AG04450 (cell line): ENCODE measurements at regions of chr12 and their contacts with region 1.

Region 1: DNA sequence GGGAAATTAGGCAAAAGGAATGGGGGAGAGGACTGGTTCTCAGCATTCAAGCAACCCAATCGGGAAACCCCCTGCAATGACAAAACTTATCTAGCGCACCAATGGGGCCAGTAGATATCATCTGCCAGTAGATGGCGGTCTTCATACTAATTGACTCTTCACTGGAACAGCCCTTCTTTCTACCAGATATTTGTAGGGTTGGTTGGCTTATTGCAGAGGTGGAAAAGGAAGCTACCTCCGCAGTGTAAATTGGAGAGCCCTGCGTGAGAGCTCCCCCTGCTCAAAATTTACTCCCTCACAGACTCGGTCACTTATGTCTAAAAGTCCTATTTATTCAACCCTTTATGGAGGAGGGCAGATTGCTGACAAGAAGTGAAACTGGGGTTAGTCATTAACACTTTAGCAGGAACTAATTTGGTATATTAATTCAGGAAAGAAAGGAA is 166.1 kb upstream of the CCND2 start:
- DNase-seq: peak; percentile 8
- H3K4me3 ChIP-seq: no peak overlapping the region
- H3K27ac ChIP-seq: no peak overlapping the region
- H3K27me3 ChIP-seq: peaks cover 3% of the 10 kb centered on the region
- CTCF ChIP-seq: peak; percentile 75

Region 2: GRCh38 chr12:3421191-3421978 is 686.1 kb before region 1 on chr12:
- CTCF ChIA-PET with region 1: no interaction called
- POLR2A ChIA-PET with region 1: no interaction called
- DNase-seq: no peak
- H3K4me3 ChIP-seq: no peak overlapping the region
- H3K27ac ChIP-seq: no peak overlapping the region
- H3K27me3 ChIP-seq: peaks cover 10% of the 10 kb centered on the region
- CTCF ChIP-seq: no peak

Region 3: DNA sequence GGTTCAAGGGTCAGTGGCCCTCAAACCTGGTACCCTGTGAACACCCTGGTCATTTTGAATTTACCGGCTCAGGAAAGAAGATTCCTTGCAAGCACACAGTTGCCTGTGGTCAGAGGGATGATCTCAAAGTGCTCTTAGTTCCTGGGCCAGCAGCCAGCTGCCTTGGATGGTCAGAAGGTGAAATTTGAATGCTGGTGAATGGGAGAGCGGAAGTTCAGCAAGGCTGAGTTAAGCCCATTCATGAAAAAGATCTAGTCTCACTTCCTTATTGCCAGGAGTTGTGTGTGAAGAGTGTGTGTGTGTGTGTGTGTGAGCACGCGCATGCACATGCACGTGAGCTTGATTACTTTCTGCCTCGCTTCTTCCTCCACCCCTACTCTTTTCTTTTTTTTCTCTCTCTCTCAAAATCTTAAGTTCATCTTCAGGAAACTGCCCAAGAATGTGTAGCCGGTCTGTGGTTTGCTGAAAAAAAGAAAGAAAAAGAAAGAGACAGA is 10.6 kb after region 1 on chr12:
- CTCF ChIA-PET with region 1: interaction called, 25 read pairs
- POLR2A ChIA-PET with region 1: no interaction called
- DNase-seq: peak; percentile 27
- H3K4me3 ChIP-seq: no peak overlapping the region
- H3K27ac ChIP-seq: no peak overlapping the region
- H3K27me3 ChIP-seq: peaks cover 4% of the 10 kb centered on the region
- CTCF ChIP-seq: no peak

Region 4: GRCh38 chr12:4156317-4156716 is 48.9 kb after region 1 on chr12:
- CTCF ChIA-PET with region 1: interaction called, 12 read pairs
- POLR2A ChIA-PET with region 1: no interaction called
- DNase-seq: no peak
- H3K4me3 ChIP-seq: no peak overlapping the region
- H3K27ac ChIP-seq: no peak overlapping the region
- H3K27me3 ChIP-seq: peaks cover 2% of the 10 kb centered on the region
- CTCF ChIP-seq: no peak

Region 5: DNA sequence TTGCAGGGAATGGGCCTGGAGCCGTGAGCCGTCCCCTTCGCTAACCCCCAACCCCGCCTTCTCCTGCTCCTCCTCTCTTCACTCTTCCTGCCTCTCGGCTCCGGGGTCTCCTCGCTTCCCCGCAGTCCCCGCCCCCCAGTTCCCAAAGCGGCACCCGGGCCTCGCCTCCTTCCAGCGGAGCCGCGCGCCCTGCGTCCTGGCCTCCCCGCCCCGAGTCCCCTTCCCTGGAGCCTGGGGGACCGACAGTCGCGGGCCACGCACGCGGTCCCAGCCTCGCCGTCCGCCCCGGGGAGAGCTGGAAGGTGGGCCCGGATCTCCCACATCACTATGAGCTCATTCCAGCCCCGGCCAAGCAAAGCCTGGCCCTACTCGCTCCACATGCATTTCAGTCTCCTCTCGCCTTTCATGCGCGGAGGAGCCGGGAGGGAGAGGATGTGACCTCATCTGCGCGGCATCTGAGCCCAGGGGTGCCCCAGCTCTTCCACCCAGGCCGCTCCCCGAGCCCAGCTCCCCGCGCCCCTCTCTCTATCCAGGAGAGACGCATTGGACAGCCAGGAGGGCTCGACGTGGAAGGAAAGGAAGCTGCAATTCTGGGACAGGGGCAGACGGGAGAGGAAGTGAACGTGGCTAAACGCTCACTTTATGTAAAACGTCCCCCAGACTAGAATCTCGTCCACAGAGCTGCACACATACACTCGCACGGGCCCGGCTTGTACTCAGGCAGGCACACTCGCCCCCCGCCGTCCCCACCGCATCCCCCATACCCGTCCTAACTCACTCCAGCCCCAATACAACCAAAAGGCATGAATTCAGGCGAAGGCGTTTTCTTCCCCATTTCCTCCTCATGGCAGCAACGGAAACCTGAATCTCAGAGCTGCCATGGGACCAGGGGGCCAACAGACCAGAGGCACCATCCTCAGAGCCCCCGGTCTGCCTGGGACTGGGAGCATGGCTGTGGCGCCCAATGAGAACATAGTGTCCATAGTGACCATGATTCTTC is 57.4 kb after region 1 on chr12:
- CTCF ChIA-PET with region 1: interaction called, 14 read pairs
- POLR2A ChIA-PET with region 1: no interaction called
- DNase-seq: peak; percentile 44
- H3K4me3 ChIP-seq: peak overlapping the region; percentile 54
- H3K27ac ChIP-seq: peak overlapping the region; percentile 68
- H3K27me3 ChIP-seq: no peaks in the 10 kb centered on the region
- CTCF ChIP-seq: no peak

Region 6: GRCh38 chr12:4287325-4288211 is 180.1 kb after region 1 on chr12:
- CTCF ChIA-PET with region 1: no interaction called
- POLR2A ChIA-PET with region 1: no interaction called
- DNase-seq: no peak
- H3K4me3 ChIP-seq: no peak overlapping the region
- H3K27ac ChIP-seq: no peak overlapping the region
- H3K27me3 ChIP-seq: peaks cover 2% of the 10 kb centered on the region
- CTCF ChIP-seq: no peak

Region 7: DNA sequence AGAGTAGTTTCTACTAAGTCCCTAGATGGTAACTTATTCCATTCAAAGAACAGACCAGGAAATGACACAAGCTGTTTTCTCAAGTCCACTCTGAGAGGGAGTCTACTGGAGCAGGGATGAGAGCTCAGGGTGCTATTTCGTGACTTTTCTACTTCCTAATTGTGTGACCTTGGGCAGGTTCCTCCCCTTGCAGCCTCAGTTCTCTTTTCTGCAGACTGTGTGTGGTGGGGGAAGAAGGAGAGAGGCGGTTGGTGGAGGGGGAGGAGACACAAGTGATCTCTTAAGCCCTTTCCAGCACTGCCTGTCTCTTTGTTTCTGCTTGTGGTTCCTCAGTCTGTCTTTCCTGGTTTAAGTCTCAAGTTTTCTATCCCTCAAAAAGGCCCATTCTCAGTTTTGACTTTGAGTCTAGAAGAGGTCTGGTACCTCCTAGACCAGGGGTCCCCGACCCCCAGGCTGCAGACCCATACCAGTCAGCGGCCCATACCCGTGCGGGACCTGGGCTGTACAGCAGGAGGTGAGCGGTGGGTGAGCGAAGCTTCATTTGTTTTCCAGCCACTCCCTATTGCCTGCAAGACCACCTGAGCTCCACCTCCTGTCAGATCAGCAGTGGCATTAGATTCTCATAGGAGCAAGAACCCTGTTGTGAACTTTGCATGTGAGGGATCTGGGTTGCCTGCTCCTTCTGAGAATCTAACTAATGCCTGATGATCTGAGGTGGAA is 327.4 kb after region 1 on chr12:
- CTCF ChIA-PET with region 1: no interaction called
- POLR2A ChIA-PET with region 1: no interaction called
- DNase-seq: no peak
- H3K4me3 ChIP-seq: no peak overlapping the region
- H3K27ac ChIP-seq: no peak overlapping the region
- H3K27me3 ChIP-seq: peaks cover 5% of the 10 kb centered on the region
- CTCF ChIP-seq: no peak